Spleen (tissue), 13 donors: ENCODE measurements at regions of chr2 and their contacts with region 1.

Region 1: GRCh38 chr2:40466935-40467572 is 15.2 kb upstream of the SLC8A1 start:
- DNase-seq: no peak
- H3K4me3 ChIP-seq: no peak overlapping the region
- H3K27ac ChIP-seq: no peak overlapping the region
- H3K4me1 ChIP-seq: peaks cover 0 to 11% (median 0%) of the 10 kb centered on the region in 6 donors
- H3K27me3 ChIP-seq: no peaks in the 10 kb centered on the region
- CTCF ChIP-seq: no peak
- POLR2A ChIP-seq: no peak

Region 2: DNA sequence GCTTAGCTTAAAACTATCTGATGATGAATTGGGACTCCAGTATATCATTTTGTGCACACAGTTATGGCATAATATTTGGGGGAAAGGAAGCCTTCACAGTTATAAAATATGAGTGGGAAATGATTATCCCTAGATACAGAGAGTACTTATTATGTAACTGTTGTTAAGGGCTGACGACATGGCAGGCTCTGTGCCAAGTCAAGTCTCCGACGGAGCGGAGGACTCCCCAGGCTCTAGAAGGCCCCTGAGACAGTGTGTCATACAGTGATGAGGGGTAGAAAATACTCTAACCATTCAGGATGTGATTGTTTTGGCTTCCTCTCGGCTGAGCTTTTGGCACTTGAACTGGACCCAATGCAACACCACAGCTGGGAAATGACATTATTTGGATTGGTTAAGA is 227.0 kb before region 1 on chr2:
- intact Hi-C with region 1: no loop called
- DNase-seq: no peak
- H3K4me3 ChIP-seq: no peak overlapping the region
- H3K27ac ChIP-seq: peak overlapping the region in 6 of 8 donors; percentile 5 to 33 (median 12)
- H3K4me1 ChIP-seq: peaks cover 0 to 16% (median 0%) of the 10 kb centered on the region in 6 donors
- H3K27me3 ChIP-seq: no peaks in the 10 kb centered on the region
- CTCF ChIP-seq: no peak
- POLR2A ChIP-seq: no peak

Region 3: DNA sequence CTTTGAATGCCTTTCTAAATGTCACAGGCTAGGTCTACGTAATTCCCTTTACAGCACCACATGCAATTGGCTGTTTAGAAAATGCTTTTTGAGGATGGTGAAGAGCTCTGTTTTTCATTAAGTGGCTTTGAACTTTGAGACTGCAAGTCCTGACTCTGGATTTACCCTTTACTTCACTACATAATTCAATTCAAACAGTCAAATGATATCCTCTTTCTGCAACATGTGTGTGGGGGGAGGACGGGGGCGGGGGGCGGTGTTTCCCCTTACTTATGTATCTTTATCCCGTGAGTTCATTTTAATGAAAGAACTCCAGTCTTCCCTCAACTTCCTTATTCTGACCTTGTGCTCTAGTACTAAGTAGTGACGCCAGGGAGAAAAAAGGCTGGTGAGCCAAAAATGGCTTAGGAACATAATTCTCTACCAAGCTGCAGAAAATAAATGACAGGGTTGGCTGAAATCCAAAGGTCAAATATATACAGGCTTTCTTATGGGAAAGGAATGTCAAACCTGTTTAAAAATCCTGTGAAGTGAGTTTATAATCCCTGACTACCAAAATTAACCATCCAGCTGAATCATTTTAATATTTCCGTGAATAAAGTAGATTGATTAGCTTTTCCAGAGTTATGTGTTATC is 134.7 kb before region 1 on chr2:
- intact Hi-C with region 1: no loop called
- DNase-seq: no peak
- H3K4me3 ChIP-seq: no peak overlapping the region
- H3K27ac ChIP-seq: peak overlapping the region in 5 of 8 donors; percentile 16 to 54 (median 37)
- H3K4me1 ChIP-seq: peaks cover 0 to 14% (median 3%) of the 10 kb centered on the region in 6 donors
- H3K27me3 ChIP-seq: no peaks in the 10 kb centered on the region
- CTCF ChIP-seq: no peak
- POLR2A ChIP-seq: no peak

Region 4: GRCh38 chr2:40990651-40991050 is 523.6 kb after region 1 on chr2:
- intact Hi-C with region 1: loop called (anchors 10 kb)
- DNase-seq: no peak
- H3K4me3 ChIP-seq: no peak overlapping the region
- H3K27ac ChIP-seq: no peak overlapping the region
- H3K4me1 ChIP-seq: no peaks in the 10 kb centered on the region
- H3K27me3 ChIP-seq: no peaks in the 10 kb centered on the region
- CTCF ChIP-seq: no peak
- POLR2A ChIP-seq: no peak